Head of caudate nucleus (tissue), 42 donors: ENCODE measurements at regions of chr10 and their contacts with region 1.

Region 1: DNA sequence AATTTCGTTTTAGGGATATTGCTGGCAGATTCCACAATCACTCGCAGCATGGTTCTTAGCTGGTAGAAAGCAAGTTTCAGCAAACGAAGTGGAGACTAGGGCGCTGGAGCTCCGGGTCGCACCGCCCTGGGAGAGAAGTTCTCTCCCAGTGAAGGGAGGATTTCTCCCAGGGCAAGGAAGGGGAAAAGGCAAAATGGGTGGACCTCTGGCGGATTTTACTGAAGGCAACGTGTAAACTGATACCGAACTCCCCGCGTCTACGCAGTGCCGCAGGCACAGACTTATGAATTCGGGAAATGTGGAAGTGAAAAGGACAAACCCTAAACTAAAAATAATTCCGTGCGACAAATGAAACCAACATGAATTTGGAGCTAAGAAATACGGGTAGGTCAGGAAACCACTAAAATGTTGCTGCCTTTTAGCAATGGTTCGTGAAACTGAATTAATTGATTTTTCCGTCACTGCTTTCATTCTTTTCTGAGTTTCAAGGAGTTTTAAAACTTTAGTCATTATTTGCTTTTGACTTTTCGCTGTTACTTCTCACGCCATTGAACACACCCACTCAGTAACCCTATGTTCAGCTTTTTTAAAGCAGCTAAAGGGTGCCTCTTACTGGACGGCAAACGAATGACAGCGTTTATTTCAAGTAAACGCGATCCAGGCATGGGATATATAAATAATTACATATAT is at the start of gene MYOF:
- DNase-seq: peak in 27 of 42 donors; percentile 13 to 71 (median 44)

Region 2: DNA sequence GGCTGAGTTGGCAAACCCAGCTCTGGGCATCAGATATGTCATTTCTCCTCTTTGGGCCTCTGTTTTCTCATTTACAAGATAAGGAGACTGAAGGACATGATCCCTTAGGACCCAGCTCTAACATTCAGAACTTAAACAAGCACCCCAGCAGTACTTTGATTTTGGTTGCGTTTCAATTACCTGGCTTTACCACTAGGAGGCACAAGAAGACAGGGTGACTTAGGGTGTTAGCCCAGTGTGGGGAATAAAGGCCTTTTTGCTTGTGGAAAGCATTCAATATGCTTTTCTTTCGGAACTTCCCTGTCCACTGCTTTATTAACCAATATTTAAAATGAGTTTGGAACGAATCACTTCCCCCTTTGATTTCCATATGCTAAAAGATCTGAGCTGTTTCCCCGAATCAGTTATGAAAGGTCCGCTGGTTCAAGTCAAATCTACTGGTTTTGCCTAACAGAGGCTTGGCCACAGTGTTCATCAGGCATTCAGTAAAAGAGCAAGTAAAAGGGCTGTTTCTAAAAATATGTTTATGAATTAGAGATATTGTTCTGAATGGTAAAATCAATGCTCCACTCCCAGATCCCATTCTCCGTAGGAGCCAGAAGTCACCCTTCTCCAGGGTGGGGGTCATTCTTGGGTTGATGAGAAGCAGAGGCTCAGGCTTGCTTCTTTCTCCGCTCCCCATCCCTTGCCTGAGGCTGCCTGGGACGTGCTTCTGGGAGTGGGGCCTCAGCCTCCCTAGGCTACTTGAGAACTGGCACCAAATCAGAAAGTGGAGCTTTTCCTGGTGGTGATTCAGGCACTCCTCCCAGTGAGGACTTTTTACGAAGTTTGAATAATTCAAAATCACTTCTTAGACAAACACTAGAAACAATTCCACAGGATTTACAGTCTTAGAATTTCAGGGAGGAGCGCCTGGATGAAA is 105.7 kb before region 1 on chr10:
- intact Hi-C with region 1: loop called (anchors 2 kb)
- DNase-seq: peak in 22 of 42 donors; percentile 14 to 80 (median 54)